Heart left ventricle (tissue), 16 donors: ENCODE measurements at regions of chr9 and their contacts with region 1.

Region 1: GRCh38 chr9:133589454-133590227 is 19.5 kb downstream of the FAM163B start:
- DNase-seq: peak in 2 of 5 donors; percentile 19 to 57
- ATAC-seq: no peak
- H3K4me3 ChIP-seq: no peak overlapping the region
- H3K27ac ChIP-seq: no peak overlapping the region
- H3K4me1 ChIP-seq: peaks cover 0 to 16% (median 8%) of the 10 kb centered on the region in 12 donors
- H3K27me3 ChIP-seq: peaks cover 9 to 34% (median 20%) of the 10 kb centered on the region in 9 donors
- CTCF ChIP-seq: peak in 11 of 12 donors; percentile 18 to 54 (median 43)
- POLR2A ChIP-seq: no peak

Region 2: DNA sequence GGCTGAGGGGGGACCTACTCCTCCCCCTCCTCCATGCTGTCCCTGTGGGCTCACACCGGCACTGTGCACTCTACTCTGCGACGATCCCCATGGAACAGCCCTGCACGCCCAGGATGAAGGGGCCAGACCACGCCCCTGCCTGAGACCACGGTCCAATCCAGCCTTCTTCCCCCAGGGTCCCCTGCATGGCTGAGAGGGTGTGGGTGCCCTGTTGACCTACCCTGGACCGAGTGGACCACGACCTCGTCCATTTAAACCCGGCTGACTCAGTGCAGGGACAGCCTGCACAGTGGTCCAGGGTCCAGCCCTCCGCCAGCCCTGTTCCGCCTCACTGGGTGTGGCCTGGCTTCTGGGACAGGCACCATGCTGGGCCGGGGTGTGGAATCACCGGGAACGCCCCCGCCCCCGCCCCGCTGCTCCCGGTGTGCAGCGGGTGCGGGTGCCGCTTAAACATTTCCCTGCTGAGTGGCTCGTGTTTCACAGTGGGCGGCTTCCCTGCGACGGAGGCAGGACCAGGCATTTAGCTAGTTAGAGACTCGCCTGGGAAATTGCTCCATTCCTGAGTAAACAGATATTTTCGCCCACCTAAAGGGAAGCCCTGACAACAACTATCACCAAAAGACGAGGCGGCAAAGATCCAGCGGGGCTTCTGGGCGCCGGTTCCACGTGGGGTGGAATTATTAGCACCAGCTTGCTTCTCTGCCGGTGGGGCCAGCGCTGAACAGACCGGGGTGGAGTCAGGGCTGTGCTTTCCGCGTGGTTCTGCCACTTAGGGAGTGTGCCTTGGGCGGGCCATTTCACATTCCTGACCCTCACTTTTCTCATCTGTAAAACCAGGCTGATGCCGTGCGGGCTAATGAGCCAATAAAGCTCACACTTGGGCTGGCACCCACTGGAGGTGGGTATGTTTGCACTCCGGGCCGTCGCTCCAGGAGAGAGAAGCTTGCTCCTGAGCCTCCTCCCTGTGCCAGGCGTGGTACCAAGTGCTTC is 69.1 kb after region 1 on chr9:
- intact Hi-C with region 1: loop called in 1 of 10 experiments (anchors 10 kb)
- DNase-seq: peak in 4 of 5 donors; percentile 28 to 66 (median 40)
- ATAC-seq: peak; percentile 57 to 85 (median 78)
- H3K4me3 ChIP-seq: peak overlapping the region in 11 of 12 donors; percentile 4 to 35 (median 25)
- H3K27ac ChIP-seq: no peak overlapping the region
- H3K4me1 ChIP-seq: peaks cover 0 to 17% (median 13%) of the 10 kb centered on the region in 12 donors
- H3K27me3 ChIP-seq: peaks cover 7 to 68% (median 20%) of the 10 kb centered on the region in 9 donors
- CTCF ChIP-seq: no peak
- POLR2A ChIP-seq: no peak

Region 3: GRCh38 chr9:133683586-133684120 is 94.0 kb after region 1 on chr9:
- intact Hi-C with region 1: loop called in 1 of 10 experiments (anchors 5 kb)
- DNase-seq: peak; percentile 68 to 89 (median 85)
- ATAC-seq: peak; percentile 24 to 84 (median 72)
- H3K4me3 ChIP-seq: peak overlapping the region in 2 of 12 donors; percentile 9 to 17
- H3K27ac ChIP-seq: peak overlapping the region; percentile 18 to 84 (median 62)
- H3K4me1 ChIP-seq: peaks cover 0 to 50% (median 33%) of the 10 kb centered on the region in 12 donors
- H3K27me3 ChIP-seq: no peaks in the 10 kb centered on the region
- CTCF ChIP-seq: no peak
- POLR2A ChIP-seq: no peak

Region 4: DNA sequence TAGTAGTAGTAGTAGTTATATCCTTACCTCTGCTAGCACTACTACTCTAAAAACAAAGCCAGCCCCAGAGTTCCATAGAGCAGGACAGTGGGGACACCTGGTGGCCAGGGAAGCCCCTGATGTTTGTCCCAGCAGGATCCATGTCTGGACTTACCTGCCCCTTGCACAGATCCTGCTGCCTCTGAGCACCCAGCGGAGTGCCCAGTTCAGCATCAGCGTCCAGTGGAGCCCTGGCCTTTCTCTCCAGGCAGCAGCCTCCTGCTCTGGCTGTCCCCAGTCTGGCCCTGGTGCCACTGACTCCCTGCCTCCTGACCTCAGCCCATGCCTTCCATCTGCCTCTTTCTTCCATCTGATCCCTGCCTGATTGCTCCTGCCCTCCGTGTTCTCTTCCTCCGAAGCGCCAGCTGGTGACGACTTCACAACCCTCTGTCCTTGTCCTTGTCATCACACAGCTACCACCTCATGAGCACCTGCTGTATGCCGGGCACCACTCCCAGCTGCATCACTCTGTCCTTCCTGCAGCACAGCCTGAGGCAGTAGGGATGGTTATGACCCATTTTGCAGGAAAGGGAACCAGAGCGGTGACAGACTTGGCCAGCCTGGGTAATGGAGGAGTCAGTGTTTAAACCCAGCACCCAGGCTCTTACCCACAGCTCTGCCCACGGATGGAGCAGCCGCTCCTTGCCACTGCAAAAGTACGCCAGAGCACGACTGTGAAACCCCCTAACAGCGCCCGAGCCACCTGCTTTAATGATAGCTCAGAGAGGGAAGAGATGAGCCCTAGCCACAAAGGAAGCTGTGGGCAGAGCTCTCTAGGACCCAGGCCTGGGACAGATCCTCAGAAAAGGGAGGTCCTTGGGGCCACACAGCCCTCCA is 137.0 kb after region 1 on chr9:
- intact Hi-C with region 1: loop called in 1 of 10 experiments (anchors 5 kb)
- DNase-seq: peak; percentile 49 to 76 (median 56)
- ATAC-seq: peak; percentile 44 to 86 (median 76)
- H3K4me3 ChIP-seq: no peak overlapping the region
- H3K27ac ChIP-seq: no peak overlapping the region
- H3K4me1 ChIP-seq: no peaks in the 10 kb centered on the region
- H3K27me3 ChIP-seq: peaks cover 0 to 20% (median 4%) of the 10 kb centered on the region in 9 donors
- CTCF ChIP-seq: peak; percentile 49 to 74 (median 64)
- POLR2A ChIP-seq: no peak